BJ (cell line): ENCODE measurements at regions of chr15 and their contacts with region 1.

Region 1: GRCh38 chr15:80567721-80568157 is 127.4 kb upstream of the ABHD17C start:
- DNase-seq: peak; percentile 73
- H3K4me3 ChIP-seq: no peak overlapping the region
- H3K27me3 ChIP-seq: no peaks in the 10 kb centered on the region
- CTCF ChIP-seq: peak; percentile 94

Region 2: DNA sequence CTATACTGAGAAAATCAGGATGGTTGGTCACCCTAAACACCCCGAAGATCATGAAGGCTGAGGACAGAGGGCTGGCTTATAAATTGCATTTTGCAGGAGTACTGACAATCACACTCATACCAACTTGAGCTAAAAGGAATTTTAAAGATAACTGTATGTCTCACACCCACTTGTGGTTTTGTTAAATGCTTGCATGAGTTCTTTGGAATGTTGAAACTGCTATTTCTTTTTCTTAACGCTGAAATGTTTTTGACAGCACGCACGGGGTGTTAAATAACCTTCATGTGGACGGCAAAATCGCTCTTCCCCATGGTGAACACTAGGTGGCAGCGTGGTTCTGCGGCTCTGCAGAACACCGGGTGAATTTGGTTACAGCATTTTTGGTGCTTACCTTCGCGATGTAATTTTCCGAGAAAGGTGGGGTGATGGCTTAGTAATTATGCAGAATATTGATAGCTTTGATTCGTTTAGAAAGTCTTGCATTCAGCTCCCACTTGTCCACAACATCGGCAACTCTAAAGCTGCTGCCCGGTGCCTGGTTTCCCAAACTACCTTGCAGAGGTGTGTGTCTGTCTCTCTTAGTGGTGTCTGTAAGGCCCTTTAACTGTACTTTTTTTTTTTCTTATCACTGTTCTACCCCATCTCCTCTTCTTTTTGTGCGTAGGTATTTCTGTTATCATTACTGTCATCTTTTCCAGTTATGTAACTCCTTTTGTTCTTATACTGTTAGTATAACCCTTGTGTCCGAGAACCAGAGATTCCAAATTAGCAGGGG is 111.9 kb before region 1 on chr15:
- CTCF ChIA-PET with region 1: interaction called, 23 read pairs
- POLR2A ChIA-PET with region 1: no interaction called
- DNase-seq: peak; percentile 88
- H3K4me3 ChIP-seq: no peak overlapping the region
- H3K27me3 ChIP-seq: no peaks in the 10 kb centered on the region
- CTCF ChIP-seq: peak; percentile 87

Region 3: GRCh38 chr15:80550219-80550907 is 17.4 kb before region 1 on chr15:
- CTCF ChIA-PET with region 1: interaction called, 14 read pairs
- POLR2A ChIA-PET with region 1: no interaction called
- DNase-seq: peak; percentile 85
- H3K4me3 ChIP-seq: no peak overlapping the region
- H3K27me3 ChIP-seq: no peaks in the 10 kb centered on the region
- CTCF ChIP-seq: no peak

Region 4: GRCh38 chr15:80619680-80620079 is 51.9 kb after region 1 on chr15:
- CTCF ChIA-PET with region 1: interaction called, 19 read pairs
- POLR2A ChIA-PET with region 1: interaction called, 5 read pairs
- DNase-seq: no peak
- H3K4me3 ChIP-seq: no peak overlapping the region
- H3K27me3 ChIP-seq: no peaks in the 10 kb centered on the region
- CTCF ChIP-seq: peak; percentile 47

Region 5: GRCh38 chr15:80788536-80788935 is 220.8 kb after region 1 on chr15:
- CTCF ChIA-PET with region 1: interaction called, 11 read pairs
- POLR2A ChIA-PET with region 1: interaction called, 4 read pairs
- DNase-seq: no peak
- H3K4me3 ChIP-seq: no peak overlapping the region
- H3K27me3 ChIP-seq: no peaks in the 10 kb centered on the region
- CTCF ChIP-seq: no peak